ENCODE measurements at regions of chr1 and their contacts with region 1.

Region 1: DNA sequence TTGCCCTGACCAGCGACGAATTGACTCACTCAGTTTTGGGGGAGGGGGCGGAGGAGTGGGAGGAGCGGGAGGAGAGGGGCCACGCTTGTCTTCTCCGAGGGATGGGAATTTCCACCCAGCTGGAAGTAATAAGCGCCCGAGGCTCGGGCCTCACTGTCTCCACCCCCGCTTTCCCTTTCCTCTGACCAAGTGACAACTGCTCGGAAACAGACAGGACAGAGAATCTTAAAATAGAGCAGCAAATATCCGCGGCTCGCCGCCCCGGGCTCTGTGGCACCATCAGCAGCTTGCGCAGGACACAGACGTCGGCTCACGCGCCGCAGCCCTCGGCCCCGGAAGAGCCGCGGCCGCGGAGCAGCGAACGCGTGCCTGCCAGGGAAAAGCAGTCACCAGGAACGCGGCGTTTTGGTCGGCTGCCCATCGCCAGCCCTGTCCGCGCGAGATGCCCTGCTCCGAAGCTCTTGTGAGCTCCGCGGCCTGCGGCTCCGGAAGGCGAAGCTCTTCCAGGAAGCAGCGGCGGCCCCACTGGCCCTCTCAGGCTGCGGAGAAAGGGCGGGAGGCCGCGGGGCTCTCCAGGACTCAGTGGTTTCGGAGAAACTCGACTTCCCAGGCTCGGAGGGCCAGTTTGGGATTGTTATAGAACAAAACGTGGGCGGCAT is 10.7 kb upstream of the RGS16 start:
- DNase-seq: peak; percentile 74
- ATAC-seq: peak; percentile 20
- H3K4me3 Mint-ChIP-seq: peak overlapping the region; percentile 69
- H3K27ac Mint-ChIP-seq: peak overlapping the region; percentile 89
- H3K4me1 Mint-ChIP-seq: peaks cover 52% of the 10 kb centered on the region
- H3K27me3 Mint-ChIP-seq: peaks cover 35% of the 10 kb centered on the region

Region 2: DNA sequence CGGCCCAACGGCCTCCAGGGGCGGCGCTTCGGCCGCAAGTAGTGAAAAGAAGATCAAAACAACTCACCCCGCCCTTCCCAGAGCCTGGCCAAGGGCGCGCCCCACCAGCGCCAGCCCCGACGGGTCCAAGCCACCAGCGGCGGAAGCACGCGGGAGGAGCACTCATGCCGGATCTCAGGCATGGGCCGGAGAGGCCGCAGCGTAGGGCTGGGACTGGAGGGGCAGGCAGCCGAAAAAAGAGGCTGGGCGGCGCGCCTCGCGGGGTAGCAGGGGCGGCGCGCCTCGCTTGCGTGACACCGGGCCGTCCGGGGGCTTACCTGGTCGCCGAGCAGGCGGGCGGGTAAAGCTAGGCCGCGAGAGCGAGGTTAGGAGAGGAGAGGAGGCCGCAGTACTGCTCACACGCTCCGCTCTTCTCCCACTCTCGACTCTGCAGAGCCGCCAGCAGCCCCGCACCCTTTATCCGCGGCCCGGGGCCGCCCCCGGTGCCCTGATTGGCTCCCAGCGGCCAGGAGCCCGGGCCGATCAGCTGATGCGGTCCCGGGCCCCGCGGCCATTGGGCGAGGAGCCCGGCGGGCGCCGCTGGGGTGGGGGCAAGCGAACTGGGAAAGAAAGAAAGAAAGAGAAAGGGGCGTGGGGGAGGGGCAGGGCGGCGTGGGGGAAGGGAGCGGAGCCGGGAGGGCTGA is 223.4 kb before region 1 on chr1 and contains the start of gene GLUL:
- CTCF ChIA-PET with region 1: no interaction called
- POLR2A ChIA-PET with region 1: no interaction called
- intact Hi-C with region 1: no loop called
- DNase-seq: peak; percentile 81
- ATAC-seq: peak; percentile 89
- H3K4me3 Mint-ChIP-seq: peak within 1 kb of the TSS; percentile 86
- H3K27ac Mint-ChIP-seq: peak within 1 kb of the TSS; percentile 80
- H3K4me1 Mint-ChIP-seq: peaks cover 20% of the 10 kb centered on the region
- H3K27me3 Mint-ChIP-seq: peaks cover 13% of the 10 kb centered on the region
- total RNA-seq, gene GLUL: 63.5 to 87.5 TPM

Region 3: DNA sequence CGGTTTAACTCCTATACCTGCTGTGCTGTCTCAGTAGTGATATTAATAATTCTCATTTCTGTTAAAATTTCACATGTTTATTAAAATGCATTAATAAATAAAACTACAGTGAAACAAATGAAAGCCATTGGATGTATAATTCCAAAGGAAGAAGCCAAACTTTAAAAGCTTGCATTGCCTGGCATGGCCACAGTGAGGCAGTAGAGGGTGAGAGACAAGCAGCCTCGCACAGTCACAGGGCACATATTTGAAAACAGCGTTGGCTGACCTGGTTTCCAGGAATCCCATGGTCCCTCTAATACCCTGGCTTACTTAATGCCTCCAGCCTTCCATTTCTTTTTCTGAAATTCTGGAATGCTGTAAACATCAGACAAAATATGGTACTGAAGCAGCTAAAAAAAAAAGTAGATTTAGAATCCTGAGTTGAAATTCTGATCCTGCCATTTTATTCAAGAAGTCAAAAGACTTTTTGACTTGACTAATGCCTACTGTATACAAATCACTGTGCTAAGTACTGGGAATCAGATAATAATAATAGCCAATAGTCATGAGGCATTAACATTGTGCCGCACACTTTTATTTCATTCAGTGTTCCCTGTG is 19.2 kb before region 1 on chr1:
- CTCF ChIA-PET with region 1: interaction called, 21 read pairs
- POLR2A ChIA-PET with region 1: interaction called, 3 read pairs
- intact Hi-C with region 1: no loop called
- DNase-seq: peak; percentile 83
- ATAC-seq: peak; percentile 68
- H3K4me3 Mint-ChIP-seq: no peak overlapping the region
- H3K27ac Mint-ChIP-seq: no peak overlapping the region
- H3K4me1 Mint-ChIP-seq: peaks cover 11% of the 10 kb centered on the region
- H3K27me3 Mint-ChIP-seq: no peaks in the 10 kb centered on the region

Region 4: DNA sequence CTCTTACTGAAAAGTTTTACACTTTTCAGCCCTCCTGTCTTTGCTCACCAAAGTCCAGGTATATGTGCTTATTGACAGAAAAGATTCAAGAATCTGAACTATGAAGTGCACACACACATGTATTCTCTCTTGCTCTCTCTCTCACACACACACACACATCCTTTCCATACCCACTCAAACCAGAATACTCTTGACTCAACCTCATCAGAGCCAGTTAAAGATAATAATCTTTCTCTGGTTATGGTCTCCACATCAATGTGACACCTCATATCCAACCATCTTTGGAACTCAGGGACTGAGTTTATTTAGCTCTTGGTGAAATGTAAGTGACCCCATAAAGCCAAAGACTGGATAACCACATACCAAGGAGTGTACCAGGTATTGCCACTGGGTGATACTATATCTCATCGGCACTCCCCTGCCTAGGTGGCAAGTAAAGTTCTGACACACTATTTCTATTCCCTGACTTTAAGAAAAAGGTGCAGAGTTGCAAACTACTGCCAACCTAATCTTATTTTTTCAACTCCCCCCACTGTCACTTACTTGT is 94.4 kb after region 1 on chr1:
- CTCF ChIA-PET with region 1: no interaction called
- POLR2A ChIA-PET with region 1: no interaction called
- intact Hi-C with region 1: loop called (anchors 1 to 2 kb)
- DNase-seq: no peak
- ATAC-seq: peak; percentile 77
- H3K4me3 Mint-ChIP-seq: no peak overlapping the region
- H3K27ac Mint-ChIP-seq: peak overlapping the region; percentile 7
- H3K4me1 Mint-ChIP-seq: peaks cover 34% of the 10 kb centered on the region
- H3K27me3 Mint-ChIP-seq: no peaks in the 10 kb centered on the region

Region 5: DNA sequence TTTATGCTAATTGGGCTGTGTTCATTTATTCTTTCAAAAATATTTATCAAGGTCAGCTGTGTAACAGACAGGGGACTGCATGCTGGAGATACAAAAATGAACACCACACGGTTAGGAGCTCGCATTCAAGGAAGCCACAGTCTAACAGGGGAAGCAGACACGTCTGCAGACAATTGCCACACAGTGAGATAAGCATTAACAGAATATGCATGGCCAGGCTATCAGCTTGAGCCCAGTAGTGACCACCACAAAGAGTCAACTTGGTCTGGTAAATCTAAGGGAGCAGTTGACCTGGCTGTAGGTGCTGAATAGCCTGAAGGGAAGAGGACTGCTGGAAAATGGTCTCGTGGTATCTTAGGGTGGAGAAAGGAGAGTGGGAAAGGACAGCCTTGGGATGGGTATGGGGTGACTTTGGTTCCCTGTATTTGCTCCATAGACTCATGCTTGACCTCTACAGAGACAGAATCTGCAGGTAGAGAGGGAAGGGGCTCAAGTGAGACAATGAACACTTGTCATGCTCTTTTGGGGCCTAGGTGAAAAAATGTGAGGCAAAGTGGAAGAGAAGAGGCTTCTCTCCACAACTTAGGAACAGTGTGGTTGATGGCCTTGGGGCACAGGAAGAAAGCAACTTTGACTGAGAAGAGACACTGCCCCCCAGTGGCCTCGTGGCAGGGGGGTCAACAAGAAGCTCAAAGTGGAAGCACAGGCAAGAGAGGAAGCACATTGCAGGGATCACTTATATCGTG is 167.1 kb after region 1 on chr1:
- CTCF ChIA-PET with region 1: interaction called, 21 read pairs
- POLR2A ChIA-PET with region 1: no interaction called
- intact Hi-C with region 1: no loop called
- DNase-seq: peak; percentile 86
- ATAC-seq: peak; percentile 77
- H3K4me3 Mint-ChIP-seq: no peak overlapping the region
- H3K27ac Mint-ChIP-seq: no peak overlapping the region
- H3K4me1 Mint-ChIP-seq: peaks cover 3% of the 10 kb centered on the region
- H3K27me3 Mint-ChIP-seq: no peaks in the 10 kb centered on the region